Activated B cell treated with CpG ODN at 0.5 μM for 24 hours (primary cell): ENCODE measurements at regions of chr3 and their contacts with region 1.

Region 1: DNA sequence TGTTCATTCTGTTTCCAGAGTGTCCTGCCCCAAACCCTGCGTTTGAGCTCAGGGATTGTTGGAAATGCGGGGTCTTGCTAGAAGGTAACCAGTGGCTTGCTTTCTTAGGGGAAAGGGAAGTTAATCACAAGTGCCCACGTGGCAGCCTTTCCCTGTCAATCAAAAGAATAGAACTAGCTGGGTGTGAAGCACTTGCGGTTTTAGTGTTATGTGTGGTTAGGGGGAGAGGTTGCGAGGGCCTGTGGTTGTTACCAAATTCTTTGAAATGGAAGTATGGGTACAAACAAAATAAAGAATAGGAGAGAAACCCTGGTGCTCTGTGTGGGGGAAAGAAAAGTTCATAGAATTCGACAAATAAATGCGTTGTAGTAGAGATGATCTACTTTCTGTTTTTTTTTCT is 67.6 kb downstream of the FNDC3B start:
- DNase-seq: no peak
- ATAC-seq: peak; percentile 56
- H3K4me3 Mint-ChIP-seq: peak overlapping the region; percentile 55
- H3K27ac Mint-ChIP-seq: peak overlapping the region; percentile 43
- H3K4me1 Mint-ChIP-seq: peaks cover 34% of the 10 kb centered on the region
- H3K27me3 Mint-ChIP-seq: peaks cover 50% of the 10 kb centered on the region
- CTCF ChIP-seq: no peak

Region 2: DNA sequence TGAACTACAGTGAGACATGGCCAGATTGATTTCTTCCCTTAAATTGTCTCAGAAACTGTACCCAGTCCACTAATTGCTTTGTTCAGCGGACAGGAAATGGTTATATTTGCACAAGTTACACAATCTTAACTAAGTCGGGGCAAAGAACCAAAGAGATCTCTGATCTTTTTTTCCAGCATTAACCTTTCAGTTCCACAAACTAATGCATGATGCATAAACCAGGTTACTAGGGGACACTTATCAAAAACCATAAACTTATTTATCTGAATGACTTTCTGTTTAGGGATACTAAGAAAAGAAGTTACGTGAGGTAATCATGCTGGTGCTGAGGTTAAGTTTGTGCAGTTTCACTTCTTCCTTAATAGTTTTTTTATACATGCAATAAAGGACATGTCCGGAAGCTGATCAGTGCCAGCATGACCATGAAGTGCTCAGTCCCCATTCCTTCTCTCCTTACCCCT is 45.2 kb before region 1 on chr3:
- CTCF ChIA-PET with region 1: no interaction called
- POLR2A ChIA-PET with region 1: no interaction called
- intact Hi-C with region 1: loop called (anchors 1 kb)
- DNase-seq: no peak
- ATAC-seq: peak; percentile 93
- H3K4me3 Mint-ChIP-seq: peak overlapping the region; percentile 32
- H3K27ac Mint-ChIP-seq: no peak overlapping the region
- H3K4me1 Mint-ChIP-seq: peaks cover 26% of the 10 kb centered on the region
- H3K27me3 Mint-ChIP-seq: peaks cover 20% of the 10 kb centered on the region
- CTCF ChIP-seq: no peak

Region 3: GRCh38 chr3:172142051-172142863 is 35.3 kb after region 1 on chr3:
- CTCF ChIA-PET with region 1: no interaction called
- POLR2A ChIA-PET with region 1: no interaction called
- intact Hi-C with region 1: loop called (anchors 5 kb)
- DNase-seq: no peak
- ATAC-seq: peak; percentile 79
- H3K4me3 Mint-ChIP-seq: peak overlapping the region; percentile 11
- H3K27ac Mint-ChIP-seq: no peak overlapping the region
- H3K4me1 Mint-ChIP-seq: peaks cover 33% of the 10 kb centered on the region
- H3K27me3 Mint-ChIP-seq: peaks cover 5% of the 10 kb centered on the region
- CTCF ChIP-seq: no peak